Ascending aorta (tissue), 2 donors: ENCODE measurements at regions of chr5 and their contacts with region 1.

Region 1: GRCh38 chr5:169197343-169197742 is 103.6 kb downstream of the SLIT3 start:
- DNase-seq: no peak
- H3K4me3 ChIP-seq: peak overlapping the region in 1 of 2 donors; percentile 42
- H3K27ac ChIP-seq: peak overlapping the region; percentile 56 to 77
- H3K4me1 ChIP-seq: peaks cover 6 to 14% of the 10 kb centered on the region in 2 donors
- H3K27me3 ChIP-seq: no peaks in the 10 kb centered on the region
- CTCF ChIP-seq: peak in 2 of 3 experiments; percentile 8 to 67

Region 2: DNA sequence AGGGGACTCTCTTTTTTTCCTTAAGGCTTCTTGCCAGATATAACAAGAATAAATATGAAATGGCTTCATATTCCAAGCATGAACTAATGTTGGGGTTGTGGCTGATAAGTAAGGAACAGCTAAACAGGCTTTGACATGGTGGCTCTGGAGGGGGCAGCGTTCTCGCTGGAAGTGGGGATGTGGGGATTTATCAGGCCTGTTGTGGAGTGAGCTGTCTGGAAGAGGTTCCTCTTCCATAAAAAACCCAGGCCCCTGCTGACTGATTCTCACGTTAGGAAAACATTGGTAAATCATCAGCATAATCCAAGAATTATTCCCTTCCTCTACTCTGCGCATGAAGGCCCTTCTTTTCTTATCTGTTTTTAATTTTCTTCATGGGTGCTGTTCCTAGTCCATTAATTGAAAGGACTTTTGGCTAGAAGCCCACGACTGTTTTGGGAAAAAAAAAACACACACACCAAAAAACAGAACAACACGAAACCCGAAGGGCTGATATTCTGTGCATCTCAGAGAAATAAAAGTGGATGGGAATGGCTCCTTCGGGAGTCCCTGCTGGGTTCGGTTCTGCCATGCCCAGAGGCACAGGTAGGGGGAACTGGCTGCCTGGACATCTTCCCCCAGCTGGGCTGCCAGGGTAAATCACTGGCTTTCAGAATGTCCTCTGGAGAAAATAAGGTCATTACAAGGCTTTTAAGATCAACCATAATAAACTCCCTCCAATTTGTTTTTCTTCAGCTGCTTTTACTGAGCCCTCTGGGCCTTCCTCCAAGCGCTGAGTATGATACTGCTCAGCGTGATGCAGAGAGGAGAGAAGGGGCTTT is 193.4 kb before region 1 on chr5:
- intact Hi-C with region 1: loop called (anchors 5 kb)
- DNase-seq: no peak
- H3K4me3 ChIP-seq: no peak overlapping the region
- H3K27ac ChIP-seq: peak overlapping the region; percentile 0 to 22
- H3K4me1 ChIP-seq: peaks cover 0 to 6% of the 10 kb centered on the region in 2 donors
- H3K27me3 ChIP-seq: no peaks in the 10 kb centered on the region
- CTCF ChIP-seq: peak; percentile 41 to 62 (median 41)

Region 3: GRCh38 chr5:169100421-169101075 is 96.8 kb before region 1 on chr5:
- intact Hi-C with region 1: no loop called
- DNase-seq: peak in 1 of 2 donors; percentile 51
- H3K4me3 ChIP-seq: no peak overlapping the region
- H3K27ac ChIP-seq: peak overlapping the region in 1 of 2 donors; percentile 17
- H3K4me1 ChIP-seq: peaks cover 10 to 31% of the 10 kb centered on the region in 2 donors
- H3K27me3 ChIP-seq: no peaks in the 10 kb centered on the region
- CTCF ChIP-seq: no peak

Region 4: DNA sequence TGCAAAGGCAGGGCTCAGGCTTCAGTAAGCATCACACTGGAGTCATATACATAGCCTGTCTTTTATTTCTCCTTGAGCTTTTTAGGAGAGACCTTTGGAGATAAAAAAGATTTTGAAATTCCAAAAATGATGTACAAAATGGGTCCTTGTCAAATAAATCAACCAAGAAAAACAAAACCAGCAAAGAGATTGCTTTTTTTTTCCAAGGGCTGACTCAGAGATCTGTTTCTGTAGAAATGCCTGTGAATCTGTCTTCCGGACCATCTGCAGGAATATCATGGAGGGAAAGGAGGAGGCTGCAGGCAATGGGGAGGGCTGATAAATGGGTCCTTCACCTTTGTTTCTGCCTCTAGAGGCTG is 26.2 kb after region 1 on chr5:
- intact Hi-C with region 1: no loop called
- DNase-seq: no peak
- H3K4me3 ChIP-seq: no peak overlapping the region
- H3K27ac ChIP-seq: no peak overlapping the region
- H3K4me1 ChIP-seq: peaks cover 0 to 14% of the 10 kb centered on the region in 2 donors
- H3K27me3 ChIP-seq: no peaks in the 10 kb centered on the region
- CTCF ChIP-seq: no peak